Common myeloid progenitor, CD34-positive (primary cell): ENCODE measurements at regions of chr10 and their contacts with region 1.

Region 1: GRCh38 chr10:49512121-49512809 is 26.7 kb downstream of the ERCC6 start:
- DNase-seq: peak; percentile 31 to 69 (median 65)
- H3K4me3 ChIP-seq: no peak overlapping the region
- H3K27ac ChIP-seq: no peak overlapping the region
- H3K4me1 ChIP-seq: peaks cover 0 to 11% (median 5%) of the 10 kb centered on the region in 4 experiments
- H3K27me3 ChIP-seq: no peaks in the 10 kb centered on the region

Region 2: DNA sequence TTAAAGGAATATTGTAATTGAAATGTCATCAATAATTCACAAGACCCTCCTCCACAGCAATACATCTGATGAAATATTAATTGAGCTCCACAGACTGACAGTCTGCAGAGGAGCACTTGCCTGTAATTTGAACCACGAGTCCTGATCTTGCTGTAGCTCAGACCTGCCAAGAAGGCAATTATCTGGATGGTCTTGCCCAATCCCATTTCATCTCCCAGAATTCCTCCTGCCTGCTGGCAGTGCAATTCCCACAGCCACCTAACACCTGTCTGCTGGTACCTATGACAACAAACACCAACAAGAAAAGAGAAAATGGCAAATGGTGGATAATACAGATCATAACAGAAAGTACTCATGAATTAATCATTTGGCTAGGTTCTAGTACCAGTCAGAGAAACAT is 11.8 kb before region 1 on chr10:
- CTCF ChIA-PET with region 1: interaction called, 23 read pairs
- POLR2A ChIA-PET with region 1: no interaction called
- DNase-seq: no peak
- H3K4me3 ChIP-seq: no peak overlapping the region
- H3K27ac ChIP-seq: no peak overlapping the region
- H3K4me1 ChIP-seq: no peaks in the 10 kb centered on the region
- H3K27me3 ChIP-seq: no peaks in the 10 kb centered on the region

Region 3: DNA sequence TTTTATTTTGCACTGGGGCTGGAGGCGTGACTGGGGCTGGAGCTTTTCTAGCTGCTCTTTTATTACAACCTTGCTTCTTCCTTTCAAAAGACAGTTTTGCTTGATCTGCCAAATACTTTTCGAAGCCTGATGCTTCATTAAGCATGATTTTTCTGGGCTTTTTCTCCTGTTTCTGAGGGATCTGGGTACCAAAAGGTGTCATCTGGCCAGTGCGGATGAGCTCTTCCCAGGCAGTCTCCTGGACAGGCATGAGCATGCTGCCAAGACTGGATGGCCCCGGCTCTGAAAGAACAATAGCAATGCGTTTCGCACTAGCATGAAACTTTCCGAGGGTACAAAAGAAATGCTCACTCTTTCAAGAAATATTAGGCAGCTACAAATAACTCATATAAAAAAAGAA is 12.2 kb after region 1 on chr10:
- CTCF ChIA-PET with region 1: interaction called, 12 read pairs
- POLR2A ChIA-PET with region 1: no interaction called
- DNase-seq: no peak
- H3K4me3 ChIP-seq: no peak overlapping the region
- H3K27ac ChIP-seq: no peak overlapping the region
- H3K4me1 ChIP-seq: no peaks in the 10 kb centered on the region
- H3K27me3 ChIP-seq: no peaks in the 10 kb centered on the region

Region 4: DNA sequence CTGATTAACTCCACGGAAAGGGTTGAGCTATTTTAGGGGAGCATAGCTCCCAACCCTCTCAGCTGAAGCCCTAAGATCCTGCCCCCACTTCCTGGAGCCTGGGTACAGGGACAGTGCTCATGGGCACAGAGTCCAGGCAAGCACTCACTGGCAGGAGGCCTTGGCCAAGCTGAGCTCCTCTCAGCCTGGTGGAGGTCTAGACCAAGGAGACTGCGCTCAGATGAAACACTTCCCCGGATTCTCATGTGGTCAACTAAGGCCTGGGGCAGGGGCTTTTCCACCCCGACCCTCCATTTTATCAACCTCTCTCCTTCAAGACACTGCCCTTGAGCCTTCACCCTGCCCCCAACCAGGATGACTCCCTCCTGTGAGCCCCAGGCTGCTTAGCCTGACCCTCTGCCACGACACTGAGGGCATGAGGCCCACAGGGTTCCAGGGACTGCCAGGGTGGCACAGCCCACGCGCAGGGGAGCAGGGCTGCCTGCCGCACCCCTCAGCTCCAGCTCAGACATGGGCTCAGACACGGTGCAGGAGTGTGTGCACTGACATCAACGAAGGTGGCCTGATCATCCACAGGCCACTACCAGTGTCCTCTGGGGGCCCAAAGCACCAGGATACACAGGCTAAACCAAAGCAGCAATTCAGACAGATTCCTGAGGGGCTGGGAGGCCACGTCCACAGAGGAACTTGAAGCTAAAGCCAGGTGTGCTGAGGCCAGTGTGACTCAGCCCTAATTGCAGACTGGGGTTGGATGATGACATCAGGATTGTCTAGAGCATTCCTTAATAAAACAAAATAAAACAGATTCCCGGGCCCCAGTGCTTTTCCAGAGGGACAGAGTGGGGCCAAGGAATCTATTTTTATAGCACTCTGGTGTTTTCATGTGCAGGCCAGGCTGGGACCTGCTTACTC is 120.4 kb after region 1 on chr10:
- CTCF ChIA-PET with region 1: no interaction called
- POLR2A ChIA-PET with region 1: no interaction called
- DNase-seq: no peak
- H3K4me3 ChIP-seq: no peak overlapping the region
- H3K27ac ChIP-seq: no peak overlapping the region
- H3K4me1 ChIP-seq: no peaks in the 10 kb centered on the region
- H3K27me3 ChIP-seq: peaks cover 0 to 63% (median 14%) of the 10 kb centered on the region in 5 experiments